ENCODE measurements at regions of chr11 and their contacts with region 1.

Region 1: GRCh38 chr11:85912414-85912813 is 57.2 kb downstream of the CCDC83 start:
- DNase-seq: no peak
- ATAC-seq: no peak
- H3K4me3 ChIP-seq: no peak overlapping the region
- H3K27ac ChIP-seq: no peak overlapping the region
- H3K4me1 ChIP-seq: no peaks in the 10 kb centered on the region
- H3K27me3 ChIP-seq: peaks cover 11% of the 10 kb centered on the region; the same call in 1 of the 2 replicates
- CTCF ChIP-seq: no peak

Region 2: DNA sequence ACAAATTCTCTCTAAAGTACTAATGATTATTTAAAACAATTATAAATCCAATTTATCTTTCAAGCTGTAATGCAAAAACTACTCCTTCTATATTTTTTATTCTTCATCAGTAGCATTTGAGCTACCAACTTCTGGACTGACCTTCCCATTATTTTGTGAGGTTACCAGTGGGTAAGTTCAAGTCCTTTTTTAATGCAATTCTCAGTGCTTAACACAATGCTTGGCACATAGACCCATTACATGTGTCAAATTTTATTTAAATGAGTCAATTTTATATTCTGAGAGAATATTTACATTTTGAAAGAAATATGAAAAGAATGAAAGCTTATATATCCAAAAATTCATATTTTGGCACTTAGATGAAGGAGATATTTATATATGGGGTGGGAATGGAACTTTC is 705.1 kb before region 1 on chr11:
- CTCF ChIA-PET with region 1: no interaction called
- POLR2A ChIA-PET with region 1: no interaction called
- in situ Hi-C with region 1: no loop called
- intact Hi-C with region 1: no loop called
- DNase-seq: no peak
- ATAC-seq: no peak
- H3K4me3 ChIP-seq: no peak overlapping the region
- H3K27ac ChIP-seq: no peak overlapping the region
- H3K4me1 ChIP-seq: no peaks in the 10 kb centered on the region
- H3K27me3 ChIP-seq: no peaks in the 10 kb centered on the region
- CTCF ChIP-seq: no peak

Region 3: DNA sequence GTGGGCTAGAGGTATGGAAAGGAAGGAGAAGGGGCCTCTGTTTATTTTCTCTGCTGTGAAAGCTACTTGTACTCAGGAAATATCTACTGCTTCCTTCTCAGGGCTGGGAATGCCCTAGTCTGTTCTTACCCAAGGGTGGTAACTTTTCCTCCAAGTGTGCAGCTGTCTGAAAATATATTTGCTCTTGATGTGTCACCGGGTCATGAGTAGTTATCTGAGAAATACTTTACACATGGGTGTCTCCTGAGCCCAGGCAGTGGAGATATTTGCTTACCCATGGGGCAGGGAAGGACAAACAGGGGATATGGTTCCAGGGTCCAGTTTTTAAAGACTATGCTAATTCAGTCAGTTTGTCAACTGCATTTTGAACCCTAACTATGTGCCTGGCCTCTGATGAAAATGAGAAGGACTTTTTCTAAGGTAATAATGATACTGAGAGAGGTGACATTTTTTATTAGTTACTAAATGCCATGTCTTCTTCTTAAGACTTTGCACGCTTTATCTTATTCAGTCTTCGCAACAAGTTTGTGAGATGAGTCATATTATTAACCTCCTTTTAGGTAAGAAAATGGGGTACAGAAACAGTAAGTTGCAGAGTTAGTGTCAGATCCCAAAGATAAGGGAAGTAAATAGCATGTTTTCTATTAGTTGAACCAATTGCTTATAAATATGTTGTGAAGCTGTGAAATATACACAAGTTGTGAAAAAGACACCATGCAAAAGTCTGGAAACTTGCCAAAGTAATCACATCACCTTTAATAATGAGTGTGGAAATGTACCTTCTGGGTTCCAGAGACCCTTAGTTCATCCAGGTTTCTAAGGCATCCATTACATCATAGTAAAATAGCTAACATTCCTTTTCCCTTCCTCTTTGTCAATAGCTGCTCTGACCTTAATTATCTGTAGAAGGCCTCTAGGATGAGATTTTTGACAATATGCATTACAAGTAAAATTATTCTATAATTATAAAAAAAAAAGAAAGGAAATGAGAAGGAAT is 124.3 kb before region 1 on chr11:
- CTCF ChIA-PET with region 1: no interaction called
- POLR2A ChIA-PET with region 1: interaction called, 14 read pairs
- in situ Hi-C with region 1: no loop called
- intact Hi-C with region 1: no loop called
- DNase-seq: peak; percentile 83
- ATAC-seq: peak; percentile 86
- H3K4me3 ChIP-seq: no peak overlapping the region
- H3K27ac ChIP-seq: peak overlapping the region; percentile 55
- H3K4me1 ChIP-seq: peaks cover 41% of the 10 kb centered on the region
- H3K27me3 ChIP-seq: no peaks in the 10 kb centered on the region
- CTCF ChIP-seq: no peak

Region 4: GRCh38 chr11:85810871-85811611 is 101.4 kb before region 1 on chr11 and contains the start of gene SYTL2:
- CTCF ChIA-PET with region 1: no interaction called
- POLR2A ChIA-PET with region 1: no interaction called
- in situ Hi-C with region 1: no loop called
- intact Hi-C with region 1: no loop called
- DNase-seq: no peak
- ATAC-seq: peak; percentile 96
- H3K4me3 ChIP-seq: peak within 1 kb of the TSS; percentile 67 to 68
- H3K27ac ChIP-seq: peak within 1 kb of the TSS; percentile 87
- H3K4me1 ChIP-seq: peaks cover 37% of the 10 kb centered on the region
- H3K27me3 ChIP-seq: no peaks in the 10 kb centered on the region
- CTCF ChIP-seq: peak; percentile 39; the same call in 1 of the 2 replicates
- total RNA-seq, gene SYTL2: 132 TPM

Measured in Panc1 (cell line).